Heart right ventricle (tissue), 16 donors: ENCODE measurements at regions of chr6 and their contacts with region 1.

Region 1: DNA sequence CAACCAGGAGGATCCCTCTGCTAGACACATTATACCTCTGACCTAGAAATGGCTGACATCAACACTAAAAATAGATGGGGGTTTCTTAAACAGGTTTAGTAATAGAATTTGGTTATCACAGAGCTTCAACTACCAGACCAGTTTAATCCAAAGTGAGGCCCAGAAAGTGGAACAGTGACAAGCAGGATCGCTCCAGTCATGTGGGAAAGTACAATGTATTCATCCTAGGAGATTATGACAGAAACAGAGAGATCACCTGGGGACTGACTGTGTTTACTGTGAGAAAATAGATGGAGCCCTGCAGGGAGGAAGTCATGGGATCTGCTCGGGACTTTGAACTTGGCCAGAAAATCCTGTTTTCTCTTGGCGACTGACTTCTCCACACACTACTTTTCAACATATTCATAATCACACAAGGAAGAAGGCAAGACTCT is 238.7 kb upstream of the SOX4 start:
- DNase-seq: no peak
- ATAC-seq: peak in 1 of 8 donors; percentile 56
- H3K4me3 ChIP-seq: no peak overlapping the region
- H3K27ac ChIP-seq: no peak overlapping the region
- H3K4me1 ChIP-seq: no peaks in the 10 kb centered on the region
- H3K27me3 ChIP-seq: no peaks in the 10 kb centered on the region
- CTCF ChIP-seq: no peak

Region 2: DNA sequence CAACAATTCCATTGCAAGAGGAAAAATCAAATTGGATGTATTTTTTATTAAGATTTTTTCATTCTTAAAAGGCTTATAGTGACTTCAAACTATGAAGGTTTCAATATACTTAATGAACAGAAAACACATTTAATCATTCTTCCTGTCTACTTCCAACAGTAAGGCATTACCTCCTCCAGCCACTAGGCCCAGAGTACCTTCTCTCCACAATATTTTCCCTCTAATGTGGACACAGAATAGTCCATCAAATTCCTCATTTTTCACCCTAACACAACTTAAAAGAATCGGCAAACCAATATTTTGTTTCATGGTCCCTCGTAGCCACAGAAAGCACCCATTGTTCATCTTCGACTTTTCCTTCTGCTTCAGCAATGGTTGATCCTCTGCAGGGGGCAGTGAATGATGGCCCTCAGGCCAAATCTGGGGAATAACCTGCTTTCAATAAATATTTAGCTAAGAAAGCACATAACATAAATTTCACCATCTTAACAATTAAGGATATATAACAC is 1853.0 kb before region 1 on chr6:
- intact Hi-C with region 1: no loop called
- DNase-seq: no peak
- ATAC-seq: no peak
- H3K4me3 ChIP-seq: no peak overlapping the region
- H3K27ac ChIP-seq: no peak overlapping the region
- H3K4me1 ChIP-seq: no peaks in the 10 kb centered on the region
- H3K27me3 ChIP-seq: no peaks in the 10 kb centered on the region
- CTCF ChIP-seq: no peak

Region 3: GRCh38 chr6:21582651-21583050 is 227.8 kb after region 1 on chr6:
- intact Hi-C with region 1: loop called in 1 of 10 experiments (anchors 5 kb)
- DNase-seq: no peak
- ATAC-seq: no peak
- H3K4me3 ChIP-seq: no peak overlapping the region
- H3K27ac ChIP-seq: no peak overlapping the region
- H3K4me1 ChIP-seq: peaks cover 0 to 13% (median 4%) of the 10 kb centered on the region in 9 donors
- H3K27me3 ChIP-seq: peaks cover 0 to 8% (median 0%) of the 10 kb centered on the region in 7 donors
- CTCF ChIP-seq: no peak